ENCODE measurements at regions of chr9 and their contacts with region 1.

Region 1: GRCh38 chr9:81759668-81760215 is 70.4 kb upstream of the TLE1 start:
- DNase-seq: peak; percentile 53 to 82
- H3K4me3 ChIP-seq: no peak overlapping the region
- H3K27ac ChIP-seq: peak overlapping the region; percentile 25 to 58
- H3K4me1 ChIP-seq: peaks cover 0 to 8% of the 10 kb centered on the region in 2 donors
- H3K27me3 ChIP-seq: no peaks in the 10 kb centered on the region
- CTCF ChIP-seq: no peak

Region 2: GRCh38 chr9:80699511-80699998 is 1060.2 kb before region 1 on chr9:
- intact Hi-C with region 1: no loop called
- DNase-seq: no peak
- H3K4me3 ChIP-seq: no peak overlapping the region
- H3K27ac ChIP-seq: no peak overlapping the region
- H3K4me1 ChIP-seq: peaks cover 0 to 5% of the 10 kb centered on the region in 2 donors
- H3K27me3 ChIP-seq: no peaks in the 10 kb centered on the region
- CTCF ChIP-seq: no peak

Region 3: DNA sequence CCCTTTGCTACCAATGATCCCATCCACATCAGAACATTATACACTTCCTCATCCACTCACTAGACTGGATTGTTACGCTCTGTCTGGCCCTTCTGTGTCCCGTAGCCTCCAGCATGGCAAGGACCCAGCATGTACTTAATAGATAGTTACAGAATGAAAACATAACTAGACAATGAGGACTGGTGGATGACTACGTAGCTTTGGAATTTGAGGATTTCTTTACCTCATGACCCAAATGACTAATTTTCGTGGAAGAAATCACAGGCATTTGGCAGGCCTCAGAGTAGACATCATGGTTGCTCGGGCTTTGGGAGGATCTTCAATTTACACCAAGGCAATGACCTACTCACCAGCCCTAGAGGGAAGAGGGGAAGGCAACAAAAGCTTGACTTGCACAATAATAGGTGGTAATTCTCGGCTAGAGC is 370.2 kb before region 1 on chr9:
- intact Hi-C with region 1: no loop called
- DNase-seq: peak in 1 of 2 donors; percentile 81
- H3K4me3 ChIP-seq: no peak overlapping the region
- H3K27ac ChIP-seq: no peak overlapping the region
- H3K4me1 ChIP-seq: no peaks in the 10 kb centered on the region
- H3K27me3 ChIP-seq: no peaks in the 10 kb centered on the region
- CTCF ChIP-seq: no peak

Region 4: GRCh38 chr9:81814401-81815166 is 54.8 kb after region 1 on chr9:
- intact Hi-C with region 1: loop called (anchors 5 kb)
- DNase-seq: no peak
- H3K4me3 ChIP-seq: no peak overlapping the region
- H3K27ac ChIP-seq: peak overlapping the region; percentile 47 to 52
- H3K4me1 ChIP-seq: peaks cover 0 to 22% of the 10 kb centered on the region in 2 donors
- H3K27me3 ChIP-seq: no peaks in the 10 kb centered on the region
- CTCF ChIP-seq: no peak

Measured in ascending aorta (tissue), 2 donors.